PC-9 (cell line): ENCODE measurements at regions of chr15 and their contacts with region 1.

Region 1: DNA sequence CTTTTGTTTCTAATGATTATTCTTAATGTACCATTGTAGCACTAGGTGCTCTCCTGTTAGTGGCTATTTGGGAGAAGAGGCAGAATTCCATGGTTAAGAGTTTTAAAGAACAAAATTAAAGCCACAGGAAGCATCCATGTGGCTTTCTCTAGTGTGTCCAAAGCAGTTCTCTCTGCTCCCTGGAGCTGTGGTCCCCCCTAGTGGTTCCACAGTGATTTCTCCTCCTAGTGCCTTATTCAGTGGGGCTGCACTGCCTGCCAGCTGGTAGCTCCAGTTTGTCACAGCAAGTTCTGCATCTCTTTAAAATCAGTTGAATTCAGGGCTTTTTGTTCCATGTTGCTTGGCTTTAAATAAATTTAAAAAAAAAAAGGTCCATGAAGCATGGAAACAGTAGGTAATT is 39.6 kb upstream of the FAM98B start:
- DNase-seq: peak in 1 of 2 experiments; percentile 46
- H3K4me3 ChIP-seq: no peak overlapping the region
- H3K27ac ChIP-seq: no peak overlapping the region
- H3K4me1 ChIP-seq: no peaks in the 10 kb centered on the region
- H3K27me3 ChIP-seq: no peaks in the 10 kb centered on the region; the same call in 1 of the 2 replicates
- CTCF ChIP-seq: peak; percentile 61

Region 2: GRCh38 chr15:38002883-38003477 is 411.4 kb before region 1 on chr15:
- CTCF ChIA-PET with region 1: no interaction called
- POLR2A ChIA-PET with region 1: no interaction called
- intact Hi-C with region 1: loop called (anchors 1 kb)
- DNase-seq: peak; percentile 37 to 46
- H3K4me3 ChIP-seq: no peak overlapping the region
- H3K27ac ChIP-seq: no peak overlapping the region
- H3K4me1 ChIP-seq: no peaks in the 10 kb centered on the region
- H3K27me3 ChIP-seq: no peaks in the 10 kb centered on the region
- CTCF ChIP-seq: peak; percentile 70